ENCODE measurements at regions of chr2 and their contacts with region 1.

Region 1: DNA sequence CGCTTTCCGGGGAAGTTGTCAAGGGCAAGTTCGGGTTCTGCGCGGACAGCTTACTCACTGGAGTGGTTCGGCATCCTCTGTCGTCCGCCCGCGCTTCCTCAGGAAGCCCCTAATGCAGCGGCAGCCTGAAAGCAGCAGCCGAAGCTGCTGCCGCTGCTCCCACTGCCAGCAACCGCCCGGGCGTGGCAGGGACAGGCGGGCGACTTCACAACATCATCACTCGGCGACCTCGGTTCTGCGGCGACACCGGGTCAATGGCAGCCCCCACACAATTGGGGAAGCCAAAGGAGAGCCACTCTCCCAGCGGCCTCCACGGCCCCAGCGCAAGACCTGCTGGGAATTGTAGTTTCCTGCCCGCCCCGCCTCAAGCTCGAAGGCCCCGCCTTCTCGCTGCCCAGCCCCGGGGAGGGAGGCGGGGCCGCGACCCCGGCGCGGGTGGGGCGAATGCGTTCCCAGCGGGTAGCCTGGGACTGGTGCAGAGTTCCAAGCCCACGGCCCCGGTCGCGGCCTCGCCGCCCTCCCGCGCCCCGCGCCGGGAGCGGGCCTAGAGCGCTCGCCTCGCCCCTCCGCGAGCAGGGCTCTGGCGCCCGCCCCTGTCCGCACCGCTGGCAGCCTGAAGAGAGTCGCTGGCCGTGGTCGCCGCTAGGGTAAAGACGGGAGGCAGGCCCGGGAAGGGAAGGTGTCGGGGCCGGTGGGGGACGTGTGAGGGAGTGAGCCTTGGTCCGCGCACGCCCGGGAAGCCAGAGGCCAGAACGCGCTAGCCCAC is at the starts of genes STRADB and TRAK2:
- DNase-seq: peak; percentile 93
- H3K4me3 Mint-ChIP-seq: peak within 1 kb of the TSS; percentile 96
- H3K27ac Mint-ChIP-seq: peak within 1 kb of the TSS; percentile 92
- H3K4me1 Mint-ChIP-seq: peaks cover 8% of the 10 kb centered on the region
- H3K27me3 Mint-ChIP-seq: no peaks in the 10 kb centered on the region
- CTCF ChIP-seq: peak; percentile 28
- total RNA-seq, gene STRADB: 22.9 and 29.8 TPM in 2 replicates
- total RNA-seq, gene TRAK2: 11.5 and 19.9 TPM in 2 replicates

Region 2: DNA sequence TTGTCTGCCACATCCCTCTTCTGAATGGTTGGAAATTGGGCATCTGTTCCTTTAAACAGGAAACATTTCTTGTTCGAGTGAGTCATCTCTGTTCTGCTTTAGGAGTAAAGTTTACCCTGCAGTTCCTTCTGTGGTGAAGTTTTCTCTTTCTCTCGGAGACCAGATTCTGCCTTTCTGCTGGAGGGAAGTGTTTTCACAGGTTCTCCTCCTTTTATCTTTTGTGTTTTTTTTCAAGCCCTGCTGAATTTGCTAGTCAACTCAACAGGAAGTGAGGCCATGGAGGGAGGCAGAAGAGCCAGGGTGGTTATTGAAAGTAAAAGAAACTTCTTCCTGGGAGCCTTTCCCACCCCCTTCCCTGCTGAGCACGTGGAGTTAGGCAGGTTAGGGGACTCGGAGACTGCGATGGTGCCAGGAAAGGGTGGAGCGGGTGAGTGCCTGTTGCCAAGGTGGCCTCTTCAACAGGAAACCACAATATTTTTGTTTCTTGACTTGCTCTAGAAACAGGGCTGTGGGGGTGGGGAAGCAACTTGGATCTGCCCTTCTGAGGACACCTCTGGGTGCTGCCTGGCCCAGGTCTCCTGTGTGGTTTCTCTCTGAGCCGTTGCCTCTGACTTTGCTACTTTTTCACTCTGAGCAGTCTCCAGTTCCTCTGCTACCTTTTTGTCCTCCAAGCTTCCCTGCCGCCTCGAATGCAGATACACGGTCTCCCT is 193.4 kb before region 1 on chr2:
- CTCF ChIA-PET with region 1: interaction called, 3 read pairs
- POLR2A ChIA-PET with region 1: interaction called, 15 read pairs
- intact Hi-C with region 1: loop called (anchors 1 kb)
- DNase-seq: peak; percentile 98
- H3K4me3 Mint-ChIP-seq: peak overlapping the region; percentile 95
- H3K27ac Mint-ChIP-seq: peak overlapping the region; percentile 99
- H3K4me1 Mint-ChIP-seq: peaks cover 20% of the 10 kb centered on the region
- H3K27me3 Mint-ChIP-seq: no peaks in the 10 kb centered on the region
- CTCF ChIP-seq: no peak

Region 3: DNA sequence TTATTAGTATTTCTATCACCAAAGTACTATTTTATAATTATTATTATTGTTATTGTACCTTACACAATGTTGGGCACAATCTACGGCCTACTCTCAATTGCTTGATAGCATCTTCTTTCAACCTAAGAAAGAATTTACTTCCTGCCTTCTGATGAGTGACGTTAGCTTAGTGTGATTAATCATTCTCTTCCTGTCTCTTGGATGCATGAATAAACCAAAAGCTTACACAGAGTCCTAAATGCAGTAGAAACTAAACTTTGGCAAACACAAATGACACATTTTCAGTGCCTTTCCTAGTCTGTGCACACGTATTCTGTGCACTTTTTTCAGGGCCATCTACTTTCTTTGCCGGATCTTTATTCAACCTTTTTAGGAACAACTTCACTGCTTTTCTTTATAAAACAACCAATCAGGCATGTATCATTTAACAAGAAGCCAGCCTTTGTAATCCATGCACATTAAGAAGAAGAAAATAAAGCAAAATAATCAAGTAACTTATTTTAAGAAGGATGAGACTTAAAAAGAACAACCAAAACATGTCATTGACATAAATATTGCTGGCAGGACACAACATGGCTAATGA is 19.3 kb before region 1 on chr2:
- CTCF ChIA-PET with region 1: interaction called, 3 read pairs
- POLR2A ChIA-PET with region 1: interaction called, 19 read pairs
- intact Hi-C with region 1: no loop called
- DNase-seq: peak; percentile 40
- H3K4me3 Mint-ChIP-seq: no peak overlapping the region
- H3K27ac Mint-ChIP-seq: peak overlapping the region; percentile 73
- H3K4me1 Mint-ChIP-seq: peaks cover 12% of the 10 kb centered on the region
- H3K27me3 Mint-ChIP-seq: no peaks in the 10 kb centered on the region
- CTCF ChIP-seq: no peak

Region 4: DNA sequence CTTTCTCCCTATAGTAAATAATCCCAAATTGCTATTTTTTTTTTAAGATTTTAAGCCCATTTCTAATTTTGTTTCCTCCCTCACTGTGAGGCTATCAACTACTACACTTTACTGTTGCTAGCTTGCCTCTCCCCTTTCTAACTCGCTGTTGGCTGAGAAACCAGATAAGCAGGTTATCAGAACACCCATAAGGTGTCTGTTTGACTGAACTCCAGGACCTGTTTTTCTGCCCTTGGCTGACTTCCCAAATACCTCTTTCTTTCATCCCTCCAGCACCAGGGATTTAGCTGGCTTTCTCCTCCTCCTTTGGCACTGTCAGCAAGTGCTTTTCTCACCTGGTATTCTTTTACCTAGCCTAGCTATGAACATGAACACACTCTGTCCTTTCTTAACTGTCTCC is 11.3 kb before region 1 on chr2:
- CTCF ChIA-PET with region 1: no interaction called
- POLR2A ChIA-PET with region 1: interaction called, 27 read pairs
- intact Hi-C with region 1: no loop called
- DNase-seq: peak; percentile 13
- H3K4me3 Mint-ChIP-seq: no peak overlapping the region
- H3K27ac Mint-ChIP-seq: no peak overlapping the region
- H3K4me1 Mint-ChIP-seq: peaks cover 6% of the 10 kb centered on the region
- H3K27me3 Mint-ChIP-seq: no peaks in the 10 kb centered on the region
- CTCF ChIP-seq: no peak

Region 5: GRCh38 chr2:201466050-201466675 is 14.7 kb after region 1 on chr2:
- CTCF ChIA-PET with region 1: interaction called, 3 read pairs
- POLR2A ChIA-PET with region 1: interaction called, 19 read pairs
- intact Hi-C with region 1: no loop called
- DNase-seq: peak; percentile 51
- H3K4me3 Mint-ChIP-seq: no peak overlapping the region
- H3K27ac Mint-ChIP-seq: peak overlapping the region; percentile 65
- H3K4me1 Mint-ChIP-seq: peaks cover 31% of the 10 kb centered on the region
- H3K27me3 Mint-ChIP-seq: no peaks in the 10 kb centered on the region
- CTCF ChIP-seq: no peak

Region 6: GRCh38 chr2:201642579-201643215 is 191.2 kb after region 1 on chr2:
- CTCF ChIA-PET with region 1: interaction called, 3 read pairs
- POLR2A ChIA-PET with region 1: interaction called, 19 read pairs
- intact Hi-C with region 1: loop called (anchors 1 kb)
- DNase-seq: peak; percentile 85
- H3K4me3 Mint-ChIP-seq: peak overlapping the region; percentile 90
- H3K27ac Mint-ChIP-seq: peak overlapping the region; percentile 96
- H3K4me1 Mint-ChIP-seq: peaks cover 19% of the 10 kb centered on the region
- H3K27me3 Mint-ChIP-seq: no peaks in the 10 kb centered on the region
- CTCF ChIP-seq: no peak

Region 7: DNA sequence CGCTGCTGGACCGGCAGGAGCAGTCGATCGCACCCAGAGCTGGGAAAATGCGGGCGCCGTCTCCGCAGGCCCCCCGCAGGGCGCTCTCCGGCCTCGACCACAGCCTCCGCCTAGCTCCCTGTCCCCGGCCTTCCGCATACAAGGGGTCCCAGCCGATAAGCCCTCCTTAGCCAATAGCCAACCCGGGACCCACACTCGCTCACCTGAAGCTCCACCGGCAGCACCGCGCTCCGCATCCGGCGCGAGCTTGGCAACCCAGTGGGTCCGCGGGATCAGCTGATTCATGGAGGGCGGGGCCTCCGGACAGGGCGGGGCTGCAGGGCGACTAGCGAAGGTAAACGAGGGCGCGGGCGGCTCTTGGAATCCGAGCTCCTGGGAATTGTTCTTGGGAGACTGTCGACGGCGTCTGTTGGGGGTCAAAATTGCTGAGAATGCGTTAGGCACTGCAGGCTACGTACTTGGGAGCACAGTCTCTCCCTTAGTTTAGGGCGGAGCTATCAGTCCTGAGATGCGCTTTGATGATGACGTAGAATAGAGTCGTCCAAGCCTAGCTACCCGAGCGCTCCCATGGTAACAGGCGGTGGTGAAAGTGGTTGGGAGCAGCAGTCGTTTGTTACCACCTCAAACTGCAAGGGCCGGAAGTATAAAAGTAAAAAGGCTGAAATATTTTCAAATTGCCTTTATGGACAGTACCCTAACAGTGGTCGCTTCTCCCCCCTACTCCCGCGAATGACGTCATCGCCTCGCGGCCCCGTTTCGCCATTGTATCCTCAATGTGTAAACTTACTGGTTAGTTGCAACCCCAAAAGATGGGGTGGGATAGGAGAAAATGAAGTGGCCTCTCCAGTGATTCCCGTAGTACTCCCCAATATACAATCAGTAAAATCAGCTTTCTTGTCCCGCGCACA is 329.5 kb after region 1 on chr2 and contains the start of gene ALS2:
- CTCF ChIA-PET with region 1: no interaction called
- POLR2A ChIA-PET with region 1: interaction called, 12 read pairs
- intact Hi-C with region 1: no loop called
- DNase-seq: peak; percentile 98
- H3K4me3 Mint-ChIP-seq: peak within 1 kb of the TSS; percentile 95
- H3K27ac Mint-ChIP-seq: peak within 1 kb of the TSS; percentile 97
- H3K4me1 Mint-ChIP-seq: peaks cover 13% of the 10 kb centered on the region
- H3K27me3 Mint-ChIP-seq: no peaks in the 10 kb centered on the region
- CTCF ChIP-seq: no peak
- total RNA-seq, gene ALS2: 14.6 and 20.7 TPM in 2 replicates

Region 8: GRCh38 chr2:202848813-202849212 is 1397.3 kb after region 1 on chr2:
- CTCF ChIA-PET with region 1: no interaction called
- POLR2A ChIA-PET with region 1: no interaction called
- intact Hi-C with region 1: no loop called
- DNase-seq: no peak
- H3K4me3 Mint-ChIP-seq: no peak overlapping the region
- H3K27ac Mint-ChIP-seq: no peak overlapping the region
- H3K4me1 Mint-ChIP-seq: no peaks in the 10 kb centered on the region
- H3K27me3 Mint-ChIP-seq: no peaks in the 10 kb centered on the region
- CTCF ChIP-seq: no peak

Measured in MCF 10A (cell line).